ENCODE measurements at regions of chr11 and their contacts with region 1.

Region 1: DNA sequence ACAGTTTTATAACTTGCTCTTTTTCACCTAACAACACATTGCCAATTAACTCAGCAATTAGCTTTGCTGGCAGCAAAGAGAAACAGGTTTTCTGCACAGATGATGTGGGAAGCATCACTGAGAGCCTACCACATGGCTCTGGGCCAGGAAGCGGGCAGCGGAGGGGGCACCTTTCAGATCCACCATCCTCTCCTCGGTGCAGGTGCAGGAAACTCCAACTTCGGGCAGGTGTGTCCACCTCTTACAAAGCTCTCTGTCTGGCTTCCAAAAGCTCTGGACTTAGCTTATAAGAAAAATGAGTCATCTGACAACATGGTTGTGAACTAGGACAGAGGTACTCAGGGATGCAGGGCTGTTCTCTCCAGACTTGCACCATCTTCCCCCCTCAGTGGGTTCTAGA is 77.0 kb downstream of the RPS6KA4 start:
- DNase-seq: peak; percentile 43
- H3K4me3 ChIP-seq: no peak overlapping the region
- H3K27ac ChIP-seq: no peak overlapping the region
- H3K4me1 ChIP-seq: peaks cover 31% of the 10 kb centered on the region
- H3K27me3 ChIP-seq: peaks cover under 1% of the 10 kb centered on the region
- CTCF ChIP-seq: no peak

Region 2: DNA sequence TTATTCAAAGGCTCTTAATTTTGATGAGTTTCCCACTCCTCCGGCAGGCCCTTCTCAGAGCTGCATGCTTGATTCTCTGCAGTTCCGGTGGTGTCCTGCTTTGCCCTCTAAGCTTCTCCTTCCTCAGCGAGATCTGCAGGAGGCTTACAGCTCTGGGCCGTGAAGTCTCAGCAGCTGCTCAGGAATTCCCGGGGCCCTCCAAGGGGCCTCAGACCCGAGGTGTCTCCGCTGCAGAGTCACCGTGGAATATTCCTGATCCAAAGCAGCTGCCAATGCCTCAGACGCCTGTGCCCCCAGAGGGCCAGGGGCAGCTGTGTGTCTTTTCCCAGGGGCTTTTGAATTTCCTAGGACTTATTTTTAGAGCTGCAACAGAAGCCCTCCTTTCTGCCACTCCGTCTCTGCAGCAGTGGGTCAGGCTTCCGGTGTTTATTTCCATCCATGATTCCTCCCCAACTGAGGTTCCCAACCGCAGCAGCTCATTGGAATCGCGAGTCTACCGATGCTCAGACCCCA is 39.9 kb before region 1 on chr11:
- CTCF ChIA-PET with region 1: no interaction called
- dilution Hi-C with region 1: loop called (anchors 5 kb)
- in situ Hi-C with region 1: no loop called
- intact Hi-C with region 1: no loop called
- DNase-seq: no peak
- H3K4me3 ChIP-seq: no peak overlapping the region
- H3K27ac ChIP-seq: no peak overlapping the region
- H3K4me1 ChIP-seq: peaks cover 17% of the 10 kb centered on the region
- H3K27me3 ChIP-seq: no peaks in the 10 kb centered on the region
- CTCF ChIP-seq: no peak

Measured in mammary epithelial cell (primary cell).